Caco-2 (cell line): ENCODE measurements at regions of chr3 and their contacts with region 1.

Region 1: DNA sequence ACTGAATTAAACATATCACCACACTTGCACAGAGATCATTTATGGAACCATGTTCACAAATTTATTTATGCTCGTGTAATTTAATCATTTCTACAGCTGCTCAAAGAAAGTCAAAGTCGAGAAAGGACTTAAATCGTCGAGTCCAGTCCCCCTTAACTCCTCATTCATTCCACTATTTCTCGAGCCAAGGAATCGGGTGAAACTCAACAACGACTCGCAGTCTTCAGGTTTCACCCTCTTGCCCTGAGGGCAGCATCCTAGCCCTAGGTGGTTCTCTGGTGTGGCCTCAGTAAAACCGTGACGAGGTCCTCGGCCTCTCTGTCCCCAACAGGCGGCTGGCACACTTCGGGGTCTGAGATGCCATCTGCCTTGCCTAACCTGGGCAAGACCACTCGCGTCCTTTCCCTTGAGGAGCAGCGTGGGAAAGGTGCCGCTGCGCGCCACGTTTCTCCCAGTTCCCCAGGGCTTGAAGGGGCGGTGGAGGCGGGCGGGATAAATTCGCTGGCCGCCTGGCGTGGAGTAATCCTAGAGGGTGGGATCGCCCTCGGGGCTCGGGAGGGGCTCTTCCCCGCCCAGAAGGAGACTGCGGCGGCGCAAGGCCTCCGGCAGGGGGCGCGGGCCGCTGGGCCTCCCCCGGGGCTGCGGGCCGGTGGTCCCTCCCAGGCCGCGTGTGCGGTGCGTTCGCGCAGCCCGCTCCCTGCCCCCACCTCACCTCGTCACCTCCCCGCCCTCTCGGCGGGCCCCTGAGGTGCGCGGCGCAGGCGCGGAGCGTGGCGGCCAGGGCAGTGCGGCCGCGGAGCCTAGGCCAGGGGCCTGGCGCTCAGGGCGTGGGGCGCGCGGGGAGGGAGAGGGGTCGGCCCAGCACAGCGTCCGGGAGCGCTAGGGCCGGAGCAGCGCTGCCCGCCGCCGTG is at the start of gene ZNF639:
- DNase-seq: peak; percentile 84 to 92
- H3K4me3 ChIP-seq: peak within 1 kb of the TSS; percentile 76
- H3K4me3 Mint-ChIP-seq: peak within 1 kb of the TSS; percentile 78
- H3K27ac Mint-ChIP-seq: peak within 1 kb of the TSS; percentile 48
- H3K4me1 ChIP-seq: peaks cover 5% of the 10 kb centered on the region; the same call in 1 of the 2 replicates
- H3K4me1 Mint-ChIP-seq: peaks cover 6% of the 10 kb centered on the region
- H3K27me3 ChIP-seq: no peaks in the 10 kb centered on the region
- H3K27me3 Mint-ChIP-seq: no peaks in the 10 kb centered on the region
- CTCF ChIP-seq: peak; percentile 67 to 86
- total RNA-seq, gene ZNF639: 28.6 TPM in 2 replicates

Region 2: DNA sequence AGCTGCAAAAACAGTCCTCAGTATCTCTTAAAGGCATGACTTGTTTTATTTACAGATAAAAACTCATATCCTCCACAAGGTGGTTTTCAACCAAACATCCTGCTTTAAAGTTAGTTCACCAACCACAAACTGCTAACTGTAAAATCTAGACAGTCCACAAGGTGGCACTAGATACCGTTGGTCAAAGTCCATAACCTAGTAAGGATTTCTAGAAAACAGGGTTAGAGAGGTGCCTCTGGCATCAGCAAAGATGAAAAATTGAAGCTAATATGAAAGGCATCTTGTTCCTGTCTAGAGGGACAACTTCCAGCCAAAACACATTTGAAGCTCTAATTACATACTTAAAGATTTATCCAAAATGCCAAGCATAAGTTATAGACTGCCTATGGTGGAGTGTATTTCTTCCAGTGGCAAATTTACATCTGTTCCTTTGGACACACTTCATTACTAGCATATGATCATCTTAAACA is 307.0 kb before region 1 on chr3:
- CTCF ChIA-PET with region 1: no interaction called
- POLR2A ChIA-PET with region 1: no interaction called
- intact Hi-C with region 1: loop called (anchors 1 kb)
- DNase-seq: peak; percentile 47 to 80
- H3K4me3 ChIP-seq: no peak overlapping the region
- H3K4me3 Mint-ChIP-seq: no peak overlapping the region
- H3K27ac Mint-ChIP-seq: no peak overlapping the region
- H3K4me1 ChIP-seq: no peaks in the 10 kb centered on the region
- H3K4me1 Mint-ChIP-seq: no peaks in the 10 kb centered on the region
- H3K27me3 ChIP-seq: no peaks in the 10 kb centered on the region
- H3K27me3 Mint-ChIP-seq: peaks cover 2% of the 10 kb centered on the region
- CTCF ChIP-seq: peak; percentile 78 to 81

Region 3: GRCh38 chr3:179105881-179106280 is 216.7 kb before region 1 on chr3:
- CTCF ChIA-PET with region 1: no interaction called
- POLR2A ChIA-PET with region 1: no interaction called
- intact Hi-C with region 1: loop called (anchors 1 kb)
- DNase-seq: no peak
- H3K4me3 ChIP-seq: no peak overlapping the region
- H3K4me3 Mint-ChIP-seq: no peak overlapping the region
- H3K27ac Mint-ChIP-seq: no peak overlapping the region
- H3K4me1 ChIP-seq: no peaks in the 10 kb centered on the region
- H3K4me1 Mint-ChIP-seq: no peaks in the 10 kb centered on the region
- H3K27me3 ChIP-seq: no peaks in the 10 kb centered on the region
- H3K27me3 Mint-ChIP-seq: peaks cover 10% of the 10 kb centered on the region
- CTCF ChIP-seq: no peak

Region 4: GRCh38 chr3:179347345-179348194 is 25.0 kb after region 1 on chr3 and contains the start of gene MFN1:
- CTCF ChIA-PET with region 1: interaction called, 3 read pairs
- POLR2A ChIA-PET with region 1: no interaction called
- intact Hi-C with region 1: loop called (anchors 2 kb)
- DNase-seq: peak; percentile 89 to 92
- H3K4me3 ChIP-seq: peak within 1 kb of the TSS; percentile 62
- H3K4me3 Mint-ChIP-seq: peak within 1 kb of the TSS; percentile 98
- H3K27ac Mint-ChIP-seq: peak within 1 kb of the TSS; percentile 96
- H3K4me1 ChIP-seq: peaks cover 10% of the 10 kb centered on the region
- H3K4me1 Mint-ChIP-seq: no peaks in the 10 kb centered on the region
- H3K27me3 ChIP-seq: no peaks in the 10 kb centered on the region
- H3K27me3 Mint-ChIP-seq: no peaks in the 10 kb centered on the region
- CTCF ChIP-seq: no peak
- total RNA-seq, gene MFN1: 46.3 and 53.9 TPM in 2 replicates

Region 5: GRCh38 chr3:179376474-179376873 is 53.9 kb after region 1 on chr3:
- CTCF ChIA-PET with region 1: no interaction called
- POLR2A ChIA-PET with region 1: no interaction called
- intact Hi-C with region 1: no loop called
- DNase-seq: no peak
- H3K4me3 ChIP-seq: no peak overlapping the region
- H3K4me3 Mint-ChIP-seq: no peak overlapping the region
- H3K27ac Mint-ChIP-seq: no peak overlapping the region
- H3K4me1 ChIP-seq: no peaks in the 10 kb centered on the region
- H3K4me1 Mint-ChIP-seq: no peaks in the 10 kb centered on the region
- H3K27me3 ChIP-seq: no peaks in the 10 kb centered on the region
- H3K27me3 Mint-ChIP-seq: no peaks in the 10 kb centered on the region
- CTCF ChIP-seq: no peak

Region 6: GRCh38 chr3:179410331-179410730 is 87.8 kb after region 1 on chr3:
- CTCF ChIA-PET with region 1: no interaction called
- POLR2A ChIA-PET with region 1: no interaction called
- intact Hi-C with region 1: no loop called
- DNase-seq: no peak
- H3K4me3 ChIP-seq: no peak overlapping the region
- H3K4me3 Mint-ChIP-seq: no peak overlapping the region
- H3K27ac Mint-ChIP-seq: no peak overlapping the region
- H3K4me1 ChIP-seq: no peaks in the 10 kb centered on the region
- H3K4me1 Mint-ChIP-seq: no peaks in the 10 kb centered on the region
- H3K27me3 ChIP-seq: no peaks in the 10 kb centered on the region
- H3K27me3 Mint-ChIP-seq: no peaks in the 10 kb centered on the region
- CTCF ChIP-seq: no peak

Region 7: GRCh38 chr3:179921500-179921899 is 599.0 kb after region 1 on chr3:
- CTCF ChIA-PET with region 1: no interaction called
- POLR2A ChIA-PET with region 1: no interaction called
- intact Hi-C with region 1: no loop called
- DNase-seq: no peak
- H3K4me3 ChIP-seq: no peak overlapping the region
- H3K4me3 Mint-ChIP-seq: no peak overlapping the region
- H3K27ac Mint-ChIP-seq: no peak overlapping the region
- H3K4me1 ChIP-seq: no peaks in the 10 kb centered on the region
- H3K4me1 Mint-ChIP-seq: no peaks in the 10 kb centered on the region
- H3K27me3 ChIP-seq: no peaks in the 10 kb centered on the region
- H3K27me3 Mint-ChIP-seq: peaks cover 21% of the 10 kb centered on the region
- CTCF ChIP-seq: no peak